Activated CD8-positive, alpha-beta T cell treated with anti-CD3 and anti-CD28 coated beads, Interleukin-2, amount 10 ng/mL, durations not matched to agents 7 days and 5 days (primary cell): ENCODE measurements at regions of chr12 and their contacts with region 1.

Region 1: GRCh38 chr12:56333679-56334489 is at the start of gene PAN2:
- DNase-seq: peak; percentile 97
- ATAC-seq: peak; percentile 94
- H3K4me3 Mint-ChIP-seq: peak within 1 kb of the TSS; percentile 96
- H3K27ac Mint-ChIP-seq: peak within 1 kb of the TSS; percentile 99
- H3K4me1 Mint-ChIP-seq: peaks cover 45% of the 10 kb centered on the region
- H3K27me3 Mint-ChIP-seq: no peaks in the 10 kb centered on the region
- total RNA-seq, gene PAN2: 61.8 to 63.7 TPM

Region 2: GRCh38 chr12:56346703-56347102 is 12.8 kb after region 1 on chr12:
- CTCF ChIA-PET with region 1: interaction called, 21 read pairs
- POLR2A ChIA-PET with region 1: interaction called, 25 read pairs
- DNase-seq: no peak
- ATAC-seq: peak; percentile 24
- H3K4me3 Mint-ChIP-seq: no peak overlapping the region
- H3K27ac Mint-ChIP-seq: peak overlapping the region; percentile 36
- H3K4me1 Mint-ChIP-seq: no peaks in the 10 kb centered on the region
- H3K27me3 Mint-ChIP-seq: no peaks in the 10 kb centered on the region

Region 3: GRCh38 chr12:56488041-56488955 is 154.4 kb after region 1 on chr12 and contains the start of gene GLS2:
- CTCF ChIA-PET with region 1: no interaction called
- POLR2A ChIA-PET with region 1: no interaction called
- DNase-seq: peak; percentile 77
- ATAC-seq: peak; percentile 97
- H3K4me3 Mint-ChIP-seq: peak within 1 kb of the TSS; percentile 76
- H3K27ac Mint-ChIP-seq: peak within 1 kb of the TSS; percentile 14
- H3K4me1 Mint-ChIP-seq: peaks cover 20% of the 10 kb centered on the region
- H3K27me3 Mint-ChIP-seq: peaks cover 50% of the 10 kb centered on the region
- total RNA-seq, gene GLS2: 0.70 to 1.1 TPM